CD8-positive, alpha-beta memory T cell (primary cell): ENCODE measurements at regions of chr15 and their contacts with region 1.

Region 1: DNA sequence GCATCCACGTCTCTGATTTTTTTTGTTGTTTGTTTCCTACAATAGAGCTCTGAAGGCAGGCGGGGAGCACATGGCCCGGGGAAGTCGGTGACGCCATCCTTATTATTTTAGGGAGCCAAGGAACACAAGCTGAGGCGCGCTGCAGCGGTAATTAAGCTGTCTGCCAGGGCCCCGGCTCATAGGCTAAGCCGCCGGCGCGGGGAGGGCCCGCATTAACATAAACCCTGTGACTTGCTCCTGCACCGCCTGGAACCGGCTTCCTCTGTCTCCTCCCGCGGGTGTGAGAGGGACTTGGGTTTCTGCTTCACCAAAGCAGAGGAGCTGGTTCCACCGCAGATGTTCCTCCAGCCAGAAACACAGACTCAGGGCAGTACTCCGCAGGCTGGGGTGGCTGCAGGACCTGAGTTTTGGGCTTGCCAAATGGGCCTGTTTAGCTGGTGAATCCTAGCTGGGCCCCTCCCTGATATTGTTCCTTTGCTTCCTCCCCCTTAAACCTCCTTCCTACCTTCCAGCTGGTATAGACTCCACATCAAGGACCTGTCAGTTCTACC is 25.3 kb downstream of the ANP32A start:
- DNase-seq: peak in 4 of 5 donors; percentile 35 to 71 (median 50)
- H3K4me3 ChIP-seq: no peak overlapping the region
- H3K4me3 Mint-ChIP-seq: peak overlapping the region; percentile 35 to 76 (median 55)
- H3K27ac ChIP-seq: peak overlapping the region; percentile 3
- H3K27ac Mint-ChIP-seq: peak overlapping the region; percentile 82 to 88 (median 86)
- H3K4me1 ChIP-seq: peaks cover 92% of the 10 kb centered on the region
- H3K4me1 Mint-ChIP-seq: peaks cover 92 to 99% (median 99%) of the 10 kb centered on the region in 3 donors
- H3K27me3 ChIP-seq: no peaks in the 10 kb centered on the region
- H3K27me3 Mint-ChIP-seq: no peaks in the 10 kb centered on the region

Region 2: DNA sequence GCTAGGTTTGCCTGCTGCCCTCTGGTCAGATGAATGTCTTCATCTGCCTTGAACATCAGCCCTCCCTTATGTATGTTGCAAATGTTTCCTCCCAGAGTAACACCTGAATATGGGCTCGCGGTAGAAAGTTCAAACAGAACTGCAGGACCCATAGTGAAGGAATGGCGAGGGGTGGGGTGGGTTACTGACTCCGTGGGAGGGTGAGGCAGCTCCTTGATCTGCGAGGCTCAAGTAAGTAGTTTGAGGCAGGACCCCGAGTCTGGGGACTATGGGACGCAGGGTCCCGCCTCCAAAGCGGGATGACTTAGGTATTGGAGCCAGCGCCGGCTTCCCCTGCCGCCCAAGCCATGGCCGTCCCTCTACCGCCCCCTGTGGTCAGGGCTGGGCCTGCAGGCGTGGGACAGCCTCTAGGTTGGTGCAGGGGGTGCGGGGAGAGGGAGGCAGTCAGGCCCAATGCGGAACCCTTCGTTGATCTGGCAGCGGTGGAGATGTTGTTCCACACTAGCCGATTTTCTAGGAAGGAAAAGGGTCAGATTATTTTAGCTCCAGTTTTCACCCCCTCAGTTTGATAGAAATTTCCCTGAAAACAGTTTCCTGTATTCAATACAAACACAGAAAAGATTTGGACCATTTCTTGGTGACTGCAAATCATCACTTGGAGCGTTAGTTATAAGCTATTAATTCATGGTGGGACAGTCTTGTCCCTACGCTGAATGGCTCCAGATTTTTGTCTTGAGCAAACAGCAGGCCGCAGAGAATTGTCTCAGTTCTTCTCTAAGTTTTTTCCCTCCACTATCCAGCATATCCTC is 144.3 kb before region 1 on chr15:
- CTCF ChIA-PET with region 1: no interaction called
- POLR2A ChIA-PET with region 1: no interaction called
- DNase-seq: peak in 2 of 5 donors; percentile 15 to 16
- H3K4me3 ChIP-seq: no peak overlapping the region
- H3K4me3 Mint-ChIP-seq: no peak overlapping the region
- H3K27ac ChIP-seq: no peak overlapping the region
- H3K27ac Mint-ChIP-seq: no peak overlapping the region
- H3K4me1 ChIP-seq: no peaks in the 10 kb centered on the region
- H3K4me1 Mint-ChIP-seq: no peaks in the 10 kb centered on the region
- H3K27me3 ChIP-seq: no peaks in the 10 kb centered on the region
- H3K27me3 Mint-ChIP-seq: peaks cover 4 to 7% of the 10 kb centered on the region in 2 donors

Region 3: GRCh38 chr15:68770216-68770615 is 25.2 kb before region 1 on chr15:
- CTCF ChIA-PET with region 1: no interaction called
- POLR2A ChIA-PET with region 1: interaction called, 11 read pairs
- DNase-seq: no peak
- H3K4me3 ChIP-seq: no peak overlapping the region
- H3K4me3 Mint-ChIP-seq: no peak overlapping the region
- H3K27ac ChIP-seq: no peak overlapping the region
- H3K27ac Mint-ChIP-seq: no peak overlapping the region
- H3K4me1 ChIP-seq: no peaks in the 10 kb centered on the region
- H3K4me1 Mint-ChIP-seq: no peaks in the 10 kb centered on the region
- H3K27me3 ChIP-seq: no peaks in the 10 kb centered on the region
- H3K27me3 Mint-ChIP-seq: peaks cover 4 to 18% of the 10 kb centered on the region in 2 donors

Region 4: GRCh38 chr15:68783226-68784058 is 11.9 kb before region 1 on chr15:
- CTCF ChIA-PET with region 1: interaction called, 15 read pairs
- POLR2A ChIA-PET with region 1: no interaction called
- DNase-seq: peak; percentile 52 to 75 (median 58)
- H3K4me3 ChIP-seq: no peak overlapping the region
- H3K4me3 Mint-ChIP-seq: no peak overlapping the region
- H3K27ac ChIP-seq: no peak overlapping the region
- H3K27ac Mint-ChIP-seq: peak overlapping the region in 7 of 8 donors; percentile 21 to 93 (median 77)
- H3K4me1 ChIP-seq: peaks cover 10% of the 10 kb centered on the region
- H3K4me1 Mint-ChIP-seq: peaks cover 23 to 34% (median 29%) of the 10 kb centered on the region in 3 donors
- H3K27me3 ChIP-seq: no peaks in the 10 kb centered on the region
- H3K27me3 Mint-ChIP-seq: no peaks in the 10 kb centered on the region

Region 5: GRCh38 chr15:68820295-68821189 is 25.2 kb after region 1 on chr15 and contains the start of gene ANP32A:
- CTCF ChIA-PET with region 1: interaction called, 12 read pairs
- POLR2A ChIA-PET with region 1: interaction called, 26 read pairs
- DNase-seq: peak; percentile 92 to 97 (median 95)
- H3K4me3 ChIP-seq: peak within 1 kb of the TSS; percentile 90
- H3K4me3 Mint-ChIP-seq: peak within 1 kb of the TSS; percentile 96 to 100 (median 99)
- H3K27ac ChIP-seq: peak within 1 kb of the TSS; percentile 74
- H3K27ac Mint-ChIP-seq: peak within 1 kb of the TSS; percentile 87 to 98 (median 95)
- H3K4me1 ChIP-seq: peaks cover 22% of the 10 kb centered on the region
- H3K4me1 Mint-ChIP-seq: peaks cover 27 to 36% (median 36%) of the 10 kb centered on the region in 3 donors
- H3K27me3 ChIP-seq: no peaks in the 10 kb centered on the region
- H3K27me3 Mint-ChIP-seq: peaks cover 0 to 4% of the 10 kb centered on the region in 2 donors
- total RNA-seq, gene ANP32A: 233 to 237 TPM

Region 6: GRCh38 chr15:68909601-68910100 is 114.3 kb after region 1 on chr15:
- CTCF ChIA-PET with region 1: no interaction called
- POLR2A ChIA-PET with region 1: no interaction called
- DNase-seq: no peak
- H3K4me3 ChIP-seq: no peak overlapping the region
- H3K4me3 Mint-ChIP-seq: no peak overlapping the region
- H3K27ac ChIP-seq: no peak overlapping the region
- H3K27ac Mint-ChIP-seq: no peak overlapping the region
- H3K4me1 ChIP-seq: no peaks in the 10 kb centered on the region
- H3K4me1 Mint-ChIP-seq: no peaks in the 10 kb centered on the region
- H3K27me3 ChIP-seq: no peaks in the 10 kb centered on the region
- H3K27me3 Mint-ChIP-seq: peaks cover 6 to 35% of the 10 kb centered on the region in 2 donors

Region 7: GRCh38 chr15:69126054-69126469 is 330.7 kb after region 1 on chr15:
- CTCF ChIA-PET with region 1: no interaction called
- POLR2A ChIA-PET with region 1: no interaction called
- DNase-seq: no peak
- H3K4me3 ChIP-seq: no peak overlapping the region
- H3K4me3 Mint-ChIP-seq: no peak overlapping the region
- H3K27ac ChIP-seq: no peak overlapping the region
- H3K27ac Mint-ChIP-seq: peak overlapping the region in 1 of 8 donors; percentile 5
- H3K4me1 ChIP-seq: no peaks in the 10 kb centered on the region
- H3K4me1 Mint-ChIP-seq: peaks cover 0 to 7% (median 2%) of the 10 kb centered on the region in 3 donors
- H3K27me3 ChIP-seq: no peaks in the 10 kb centered on the region
- H3K27me3 Mint-ChIP-seq: peaks cover 0 to 2% of the 10 kb centered on the region in 2 donors

Region 8: GRCh38 chr15:69209661-69210060 is 414.3 kb after region 1 on chr15:
- CTCF ChIA-PET with region 1: no interaction called
- POLR2A ChIA-PET with region 1: no interaction called
- DNase-seq: no peak
- H3K4me3 ChIP-seq: no peak overlapping the region
- H3K4me3 Mint-ChIP-seq: no peak overlapping the region
- H3K27ac ChIP-seq: no peak overlapping the region
- H3K27ac Mint-ChIP-seq: no peak overlapping the region
- H3K4me1 ChIP-seq: no peaks in the 10 kb centered on the region
- H3K4me1 Mint-ChIP-seq: peaks cover 0 to 11% (median 10%) of the 10 kb centered on the region in 3 donors
- H3K27me3 ChIP-seq: no peaks in the 10 kb centered on the region
- H3K27me3 Mint-ChIP-seq: no peaks in the 10 kb centered on the region